ENCODE measurements at regions of chr16 and their contacts with region 1.

Region 1: GRCh38 chr16:15427648-15428239 is 6.6 kb upstream of the BMERB1 start:
- DNase-seq: peak; percentile 55
- H3K4me3 ChIP-seq: no peak overlapping the region
- H3K27ac ChIP-seq: peak overlapping the region in 3 of 4 donors; percentile 1 to 34 (median 25)
- H3K4me1 ChIP-seq: peaks cover 0 to 5% (median 3%) of the 10 kb centered on the region in 4 donors
- H3K27me3 ChIP-seq: peaks cover under 1% of the 10 kb centered on the region
- CTCF ChIP-seq: peak; percentile 53 to 74 (median 62)
- EP300 ChIP-seq: no peak
- POLR2A ChIP-seq: no peak

Region 2: DNA sequence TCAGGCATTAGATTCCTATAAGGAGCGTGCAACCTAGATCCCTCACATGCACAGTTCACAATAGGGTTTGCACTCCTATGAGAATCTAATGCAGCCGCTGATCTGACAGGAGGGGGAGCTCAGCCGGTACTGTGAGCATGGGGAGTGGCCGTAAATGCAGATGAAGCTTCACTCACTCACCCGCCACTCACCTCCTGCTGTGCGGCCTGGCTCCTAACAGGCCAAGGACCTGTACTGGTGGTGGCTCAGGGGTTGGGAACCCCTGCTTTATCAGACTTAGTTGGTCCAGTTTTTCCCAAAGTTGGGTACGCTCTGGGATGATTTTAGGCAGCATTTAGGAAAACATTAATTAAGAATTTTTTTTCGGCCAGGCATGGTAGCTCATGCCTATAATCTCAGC is 111.5 kb after region 1 on chr16:
- in situ Hi-C with region 1: loop called in 1 of 4 experiments (anchors 25 kb)
- intact Hi-C with region 1: no loop called
- DNase-seq: peak; percentile 15
- H3K4me3 ChIP-seq: no peak overlapping the region
- H3K27ac ChIP-seq: no peak overlapping the region
- H3K4me1 ChIP-seq: no peaks in the 10 kb centered on the region
- H3K27me3 ChIP-seq: no peaks in the 10 kb centered on the region
- CTCF ChIP-seq: no peak
- EP300 ChIP-seq: no peak
- POLR2A ChIP-seq: no peak

Measured in transverse colon (tissue), 4 donors.